ENCODE measurements at regions of chr2 and their contacts with region 1.

Region 1: GRCh38 chr2:226461981-226462380 is 337.6 kb downstream of the IRS1 start:
- DNase-seq: no peak
- H3K4me3 ChIP-seq: no peak overlapping the region
- H3K27me3 ChIP-seq: no peaks in the 10 kb centered on the region
- CTCF ChIP-seq: no peak

Region 2: GRCh38 chr2:226483745-226484619 is 22.0 kb after region 1 on chr2:
- CTCF ChIA-PET with region 1: interaction called, 3 read pairs
- POLR2A ChIA-PET with region 1: interaction called, 11 read pairs
- DNase-seq: peak; percentile 63
- H3K4me3 ChIP-seq: no peak overlapping the region; the same call in 1 of the 2 replicates
- H3K27me3 ChIP-seq: no peaks in the 10 kb centered on the region
- CTCF ChIP-seq: no peak